Activated CD4-positive, alpha-beta memory T cell treated with anti-CD3 and anti-CD28 coated beads for 36 hours (primary cell): ENCODE measurements at regions of chr17 and their contacts with region 1.

Region 1: GRCh38 chr17:42322382-42323267 is 34.3 kb downstream of the STAT5A start:
- DNase-seq: peak; percentile 96
- H3K4me3 Mint-ChIP-seq: no peak overlapping the region
- H3K27ac Mint-ChIP-seq: peak overlapping the region; percentile 67
- H3K4me1 Mint-ChIP-seq: peaks cover 37% of the 10 kb centered on the region
- H3K27me3 Mint-ChIP-seq: no peaks in the 10 kb centered on the region

Region 2: GRCh38 chr17:41992576-41992975 is 330.0 kb before region 1 on chr17:
- CTCF ChIA-PET with region 1: no interaction called
- POLR2A ChIA-PET with region 1: no interaction called
- intact Hi-C with region 1: no loop called
- DNase-seq: no peak
- H3K4me3 Mint-ChIP-seq: no peak overlapping the region
- H3K27ac Mint-ChIP-seq: no peak overlapping the region
- H3K4me1 Mint-ChIP-seq: peaks cover 15% of the 10 kb centered on the region
- H3K27me3 Mint-ChIP-seq: no peaks in the 10 kb centered on the region

Region 3: GRCh38 chr17:42312285-42313130 is 10.1 kb before region 1 on chr17:
- CTCF ChIA-PET with region 1: interaction called, 54 read pairs
- POLR2A ChIA-PET with region 1: interaction called, 5 read pairs
- intact Hi-C with region 1: no loop called
- DNase-seq: peak; percentile 92
- H3K4me3 Mint-ChIP-seq: peak overlapping the region; percentile 42
- H3K27ac Mint-ChIP-seq: peak overlapping the region; percentile 74
- H3K4me1 Mint-ChIP-seq: peaks cover 76% of the 10 kb centered on the region
- H3K27me3 Mint-ChIP-seq: no peaks in the 10 kb centered on the region

Region 4: DNA sequence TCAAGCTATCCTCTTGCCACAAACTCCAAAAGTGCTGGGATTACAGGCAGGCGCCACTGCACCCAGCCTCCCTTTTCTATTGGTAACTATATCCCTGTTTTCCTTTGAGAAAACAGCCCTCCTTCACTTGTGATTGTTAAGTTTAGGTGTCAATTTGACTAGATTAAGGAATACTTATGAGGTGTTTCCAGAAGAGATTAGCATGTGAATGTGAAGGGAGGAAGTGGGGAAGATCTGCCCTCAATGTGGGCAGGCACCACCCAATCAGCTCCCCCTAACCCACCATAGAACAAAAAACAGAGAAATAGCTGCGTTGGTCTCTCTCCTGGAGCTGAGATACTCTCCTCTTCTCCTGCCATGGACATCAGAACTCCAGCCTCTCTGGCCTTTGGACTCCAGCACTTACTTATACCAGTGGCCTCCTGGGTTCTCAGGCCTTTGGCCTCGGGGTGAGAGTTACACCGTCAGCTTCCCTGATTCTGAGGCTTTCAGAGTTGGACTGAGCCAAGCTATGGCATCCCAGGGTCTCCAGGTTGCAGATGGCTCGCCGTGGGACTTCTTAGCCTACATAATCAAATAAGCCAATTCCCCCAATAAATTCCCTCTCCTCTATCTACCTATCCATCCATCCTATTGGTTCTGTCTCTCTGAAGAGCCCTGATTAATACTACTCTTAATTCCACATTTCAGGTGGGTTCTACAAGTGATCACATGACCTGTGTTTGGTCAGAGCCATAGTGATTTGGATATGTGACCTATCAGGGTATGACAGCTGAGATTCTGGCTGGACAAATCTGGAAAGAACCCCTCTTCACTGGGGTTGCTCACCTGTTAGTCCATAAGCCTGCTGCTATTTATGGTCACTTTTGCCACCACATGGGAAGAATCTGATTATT is 77.6 kb after region 1 on chr17:
- CTCF ChIA-PET with region 1: interaction called, 281 read pairs
- POLR2A ChIA-PET with region 1: interaction called, 4 read pairs
- intact Hi-C with region 1: loop called (anchors 1 kb)
- DNase-seq: no peak
- H3K4me3 Mint-ChIP-seq: no peak overlapping the region
- H3K27ac Mint-ChIP-seq: no peak overlapping the region
- H3K4me1 Mint-ChIP-seq: peaks cover 15% of the 10 kb centered on the region
- H3K27me3 Mint-ChIP-seq: no peaks in the 10 kb centered on the region

Region 5: GRCh38 chr17:42414704-42415409 is 92.2 kb after region 1 on chr17:
- CTCF ChIA-PET with region 1: interaction called, 281 read pairs
- POLR2A ChIA-PET with region 1: no interaction called
- intact Hi-C with region 1: no loop called
- DNase-seq: peak; percentile 87
- H3K4me3 Mint-ChIP-seq: peak overlapping the region; percentile 49
- H3K27ac Mint-ChIP-seq: peak overlapping the region; percentile 69
- H3K4me1 Mint-ChIP-seq: peaks cover 17% of the 10 kb centered on the region
- H3K27me3 Mint-ChIP-seq: no peaks in the 10 kb centered on the region